Right ventricle myocardium inferior (tissue), 1 donor: ENCODE measurements at regions of chr12 and their contacts with region 1.

Region 1: GRCh38 chr12:85468356-85469157 is 188.5 kb downstream of the ALX1 start:
- DNase-seq: no peak
- ATAC-seq: peak; percentile 37

Region 2: GRCh38 chr12:85301051-85301450 is 167.5 kb before region 1 on chr12:
- intact Hi-C with region 1: no loop called
- DNase-seq: no peak
- ATAC-seq: no peak

Region 3: GRCh38 chr12:85405781-85406522 is 62.6 kb before region 1 on chr12:
- intact Hi-C with region 1: no loop called
- DNase-seq: no peak
- ATAC-seq: no peak

Region 4: DNA sequence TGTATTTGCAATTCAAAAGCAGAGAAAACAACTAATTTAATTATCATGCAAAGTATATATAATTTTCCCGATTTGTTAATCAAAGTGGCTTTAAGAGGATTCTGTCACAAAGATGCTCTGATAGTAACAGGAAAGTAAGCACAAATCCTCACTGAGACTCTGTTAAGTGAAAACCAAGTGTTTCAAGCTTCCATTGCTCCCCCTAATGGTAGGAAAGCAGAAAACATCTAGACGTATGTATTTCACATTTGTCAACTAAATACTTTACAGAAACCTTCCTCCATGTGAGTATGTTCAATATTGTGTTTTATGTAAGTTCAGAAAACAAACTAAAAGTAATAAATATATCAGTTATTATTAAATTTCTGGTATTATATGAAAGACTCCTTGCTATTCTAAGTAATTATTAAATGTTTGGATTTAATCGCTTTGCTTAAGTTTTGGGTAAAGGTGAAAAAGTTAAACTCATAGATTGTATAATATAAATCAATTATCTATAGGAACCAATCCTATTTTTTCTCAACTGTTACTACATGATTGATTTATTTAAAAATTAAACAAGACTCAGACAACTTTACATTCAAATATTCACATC is 404.0 kb after region 1 on chr12:
- intact Hi-C with region 1: loop called (anchors 5 kb)
- DNase-seq: no peak
- ATAC-seq: no peak

Region 5: GRCh38 chr12:85920324-85920947 is 451.9 kb after region 1 on chr12:
- intact Hi-C with region 1: loop called (anchors 5 kb)
- DNase-seq: no peak
- ATAC-seq: no peak